ENCODE measurements at regions of chr4 and their contacts with region 1.

Region 1: GRCh38 chr4:15231265-15232091 is 196.4 kb upstream of the C1QTNF7 start:
- DNase-seq: peak; percentile 76

Region 2: GRCh38 chr4:15457406-15458201 is 226.1 kb after region 1 on chr4:
- in situ Hi-C with region 1: loop called (anchors 25 kb)
- DNase-seq: peak; percentile 76

Measured in KBM-7 (cell line).